ENCODE measurements at regions of chr2 and their contacts with region 1.

Region 1: GRCh38 chr2:129277585-129277981 is 701.9 kb upstream of the RAB6C start:
- DNase-seq: no peak
- H3K4me3 ChIP-seq: no peak overlapping the region
- H3K27ac ChIP-seq: no peak overlapping the region
- H3K4me1 ChIP-seq: no peaks in the 10 kb centered on the region
- H3K27me3 ChIP-seq: no peaks in the 10 kb centered on the region
- CTCF ChIP-seq: no peak
- EP300 ChIP-seq: no peak
- POLR2A ChIP-seq: no peak
- RAD21 ChIP-seq: no peak

Region 2: GRCh38 chr2:129253461-129253812 is 24.1 kb before region 1 on chr2:
- CTCF ChIA-PET with region 1: interaction called, 15 read pairs
- POLR2A ChIA-PET with region 1: no interaction called
- DNase-seq: peak in 1 of 2 experiments; percentile 15
- H3K4me3 ChIP-seq: no peak overlapping the region
- H3K27ac ChIP-seq: no peak overlapping the region
- H3K4me1 ChIP-seq: no peaks in the 10 kb centered on the region
- H3K27me3 ChIP-seq: no peaks in the 10 kb centered on the region
- CTCF ChIP-seq: peak; percentile 52 to 69 (median 52); a peak in 3 of 4 replicates
- EP300 ChIP-seq: no peak
- POLR2A ChIP-seq: no peak
- RAD21 ChIP-seq: peak; percentile 78 to 83

Region 3: DNA sequence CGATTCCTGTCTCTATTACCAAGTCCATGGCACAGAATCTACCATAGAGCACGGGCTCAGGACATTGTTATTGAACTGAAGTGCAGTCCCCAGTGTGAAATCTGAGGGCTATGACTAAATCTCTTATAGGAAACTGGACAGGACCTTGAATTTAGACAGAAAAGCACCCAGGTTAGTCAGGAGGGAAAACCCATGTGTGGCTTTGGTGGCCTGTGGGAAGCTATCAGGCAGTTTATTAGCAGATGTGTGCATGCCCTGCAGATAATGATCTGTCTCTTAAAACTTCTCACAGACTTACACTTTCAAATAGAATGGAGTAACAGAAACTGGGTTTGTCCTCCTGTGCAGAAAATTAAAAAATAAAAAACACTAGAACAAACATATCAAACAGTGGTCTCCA is 91.9 kb after region 1 on chr2:
- CTCF ChIA-PET with region 1: no interaction called
- POLR2A ChIA-PET with region 1: no interaction called
- DNase-seq: no peak
- H3K4me3 ChIP-seq: no peak overlapping the region
- H3K27ac ChIP-seq: no peak overlapping the region
- H3K4me1 ChIP-seq: no peaks in the 10 kb centered on the region
- H3K27me3 ChIP-seq: no peaks in the 10 kb centered on the region
- CTCF ChIP-seq: no peak
- EP300 ChIP-seq: no peak
- POLR2A ChIP-seq: no peak
- RAD21 ChIP-seq: no peak